ENCODE measurements at regions of chr1 and their contacts with region 1.

Region 1: DNA sequence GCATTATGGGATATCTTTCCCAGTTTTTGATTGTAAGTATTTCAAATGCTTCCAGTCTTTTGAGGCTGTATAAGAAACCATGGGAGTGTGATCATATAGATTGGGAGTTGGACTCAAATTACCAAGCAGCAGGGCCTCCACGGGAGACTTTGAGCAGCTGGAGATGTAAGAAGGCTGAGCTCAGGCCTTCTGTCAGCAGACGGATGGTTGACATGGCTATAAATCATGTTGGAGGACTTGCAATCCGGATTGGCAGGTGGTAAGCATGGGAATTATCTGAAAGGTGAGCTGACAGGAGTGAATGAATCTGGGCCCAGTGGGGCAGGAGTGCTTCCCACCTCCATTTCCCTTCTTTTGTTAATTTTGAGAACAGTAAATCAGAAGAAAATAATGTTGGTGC is 83.2 kb upstream of the PPM1J start:
- DNase-seq: no peak
- ATAC-seq: no peak
- H3K4me3 ChIP-seq: no peak overlapping the region
- H3K27ac ChIP-seq: no peak overlapping the region
- H3K4me1 ChIP-seq: no peaks in the 10 kb centered on the region
- CTCF ChIP-seq: no peak
- EP300 ChIP-seq: no peak
- POLR2A ChIP-seq: no peak
- RAD21 ChIP-seq: no peak

Region 2: GRCh38 chr1:112809253-112809684 is 11.0 kb after region 1 on chr1:
- CTCF ChIA-PET with region 1: interaction called, 20 read pairs
- POLR2A ChIA-PET with region 1: no interaction called
- DNase-seq: peak; percentile 49 to 79
- ATAC-seq: peak; percentile 92 to 95
- H3K4me3 ChIP-seq: no peak overlapping the region
- H3K27ac ChIP-seq: no peak overlapping the region
- H3K4me1 ChIP-seq: no peaks in the 10 kb centered on the region
- CTCF ChIP-seq: peak; percentile 71
- EP300 ChIP-seq: no peak
- POLR2A ChIP-seq: no peak
- RAD21 ChIP-seq: peak; percentile 75

Measured in A549 (cell line).